ENCODE measurements at regions of chr17 and their contacts with region 1.

Region 1: GRCh38 chr17:2266045-2266864 is 37.3 kb downstream of the SMG6 start:
- DNase-seq: peak; percentile 58 to 97 (median 84)
- ATAC-seq: peak; percentile 79
- H3K4me3 ChIP-seq: peak overlapping the region; percentile 34 to 51
- H3K4me3 Mint-ChIP-seq: peak overlapping the region; percentile 58
- H3K27ac ChIP-seq: peak overlapping the region; percentile 88 to 95
- H3K27ac Mint-ChIP-seq: peak overlapping the region; percentile 96
- H3K4me1 ChIP-seq: peaks cover 86% of the 10 kb centered on the region
- H3K4me1 Mint-ChIP-seq: peaks cover 83% of the 10 kb centered on the region
- H3K27me3 ChIP-seq: no peaks in the 10 kb centered on the region
- H3K27me3 Mint-ChIP-seq: no peaks in the 10 kb centered on the region
- CTCF ChIP-seq: no peak

Region 2: GRCh38 chr17:2101448-2102257 is 164.6 kb before region 1 on chr17:
- CTCF ChIA-PET with region 1: no interaction called
- POLR2A ChIA-PET with region 1: no interaction called
- intact Hi-C with region 1: no loop called
- DNase-seq: peak in 8 of 9 experiments; percentile 39 to 81 (median 63)
- ATAC-seq: peak; percentile 83
- H3K4me3 ChIP-seq: no peak overlapping the region
- H3K4me3 Mint-ChIP-seq: peak overlapping the region; percentile 2
- H3K27ac ChIP-seq: peak overlapping the region; percentile 16 to 31
- H3K27ac Mint-ChIP-seq: peak overlapping the region; percentile 63
- H3K4me1 ChIP-seq: peaks cover 20% of the 10 kb centered on the region
- H3K4me1 Mint-ChIP-seq: peaks cover 18% of the 10 kb centered on the region
- H3K27me3 ChIP-seq: no peaks in the 10 kb centered on the region
- H3K27me3 Mint-ChIP-seq: no peaks in the 10 kb centered on the region
- CTCF ChIP-seq: no peak

Region 3: GRCh38 chr17:2192367-2193057 is 73.7 kb before region 1 on chr17:
- CTCF ChIA-PET with region 1: no interaction called
- POLR2A ChIA-PET with region 1: no interaction called
- intact Hi-C with region 1: loop called in 1 of 2 experiments (anchors 5 kb)
- DNase-seq: peak; percentile 24 to 89 (median 74)
- ATAC-seq: peak; percentile 90
- H3K4me3 ChIP-seq: no peak overlapping the region
- H3K4me3 Mint-ChIP-seq: peak overlapping the region; percentile 62
- H3K27ac ChIP-seq: peak overlapping the region in 1 of 2 experiments; percentile 33
- H3K27ac Mint-ChIP-seq: peak overlapping the region; percentile 87
- H3K4me1 ChIP-seq: peaks cover 48% of the 10 kb centered on the region
- H3K4me1 Mint-ChIP-seq: peaks cover 63% of the 10 kb centered on the region
- H3K27me3 ChIP-seq: no peaks in the 10 kb centered on the region
- H3K27me3 Mint-ChIP-seq: no peaks in the 10 kb centered on the region
- CTCF ChIP-seq: no peak

Region 4: DNA sequence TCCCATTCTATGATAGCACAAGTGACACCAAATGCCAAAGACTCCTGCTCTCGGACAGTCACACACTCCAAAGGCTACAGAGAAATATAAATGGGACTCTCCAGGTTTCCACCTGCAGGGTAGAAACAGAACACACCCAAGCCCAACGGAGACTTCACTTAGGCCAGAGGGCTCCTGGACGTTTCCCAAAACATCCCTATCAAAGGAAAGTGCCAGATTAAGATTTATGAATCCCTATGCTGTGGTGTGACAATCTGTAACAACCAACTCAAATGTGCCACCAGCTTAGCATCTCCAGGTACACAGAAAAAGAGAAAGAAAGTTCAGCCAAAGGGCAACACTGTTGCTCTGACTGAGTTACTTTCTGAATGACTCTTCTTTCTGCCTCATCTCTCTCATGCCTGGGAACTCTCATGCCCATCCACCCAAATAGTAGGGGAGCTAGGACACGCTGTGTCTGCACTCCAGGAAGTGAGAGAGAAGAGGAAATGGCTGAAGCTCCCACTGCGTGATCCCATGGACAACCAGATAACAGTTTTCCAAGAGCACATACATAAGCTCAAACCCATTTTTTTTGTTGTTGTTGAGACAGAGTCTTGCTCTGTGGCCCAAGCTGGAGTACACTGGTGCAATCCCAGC is 12.4 kb before region 1 on chr17:
- CTCF ChIA-PET with region 1: interaction called, 8 read pairs
- POLR2A ChIA-PET with region 1: interaction called, 12 read pairs
- intact Hi-C with region 1: loop called (anchors 1 kb)
- DNase-seq: peak in 1 of 9 experiments; percentile 33
- ATAC-seq: peak; percentile 36
- H3K4me3 ChIP-seq: no peak overlapping the region
- H3K4me3 Mint-ChIP-seq: no peak overlapping the region
- H3K27ac ChIP-seq: peak overlapping the region in 1 of 2 experiments; percentile 3
- H3K27ac Mint-ChIP-seq: peak overlapping the region; percentile 84
- H3K4me1 ChIP-seq: peaks cover 54% of the 10 kb centered on the region
- H3K4me1 Mint-ChIP-seq: peaks cover 61% of the 10 kb centered on the region
- H3K27me3 ChIP-seq: no peaks in the 10 kb centered on the region
- H3K27me3 Mint-ChIP-seq: no peaks in the 10 kb centered on the region
- CTCF ChIP-seq: no peak

Region 5: GRCh38 chr17:2282297-2282873 is 16.1 kb after region 1 on chr17:
- CTCF ChIA-PET with region 1: interaction called, 21 read pairs
- POLR2A ChIA-PET with region 1: interaction called, 7 read pairs
- intact Hi-C with region 1: loop called (anchors 1 kb)
- DNase-seq: peak in 2 of 9 experiments; percentile 71 to 81
- ATAC-seq: peak; percentile 77
- H3K4me3 ChIP-seq: no peak overlapping the region
- H3K4me3 Mint-ChIP-seq: no peak overlapping the region
- H3K27ac ChIP-seq: no peak overlapping the region
- H3K27ac Mint-ChIP-seq: peak overlapping the region; percentile 53
- H3K4me1 ChIP-seq: peaks cover 9% of the 10 kb centered on the region
- H3K4me1 Mint-ChIP-seq: peaks cover 21% of the 10 kb centered on the region
- H3K27me3 ChIP-seq: no peaks in the 10 kb centered on the region
- H3K27me3 Mint-ChIP-seq: no peaks in the 10 kb centered on the region
- CTCF ChIP-seq: peak; percentile 84

Region 6: GRCh38 chr17:2303204-2304188 is 37.2 kb after region 1 on chr17 and contains the starts of genes SMG6 and SRR:
- CTCF ChIA-PET with region 1: no interaction called
- POLR2A ChIA-PET with region 1: interaction called, 16 read pairs
- intact Hi-C with region 1: no loop called
- DNase-seq: peak; percentile 89 to 98 (median 95)
- ATAC-seq: peak; percentile 91
- H3K4me3 ChIP-seq: peak within 1 kb of the TSS; percentile 95 to 98
- H3K4me3 Mint-ChIP-seq: peak within 1 kb of the TSS; percentile 93
- H3K27ac ChIP-seq: peak within 1 kb of the TSS; percentile 76 to 85
- H3K27ac Mint-ChIP-seq: peak within 1 kb of the TSS; percentile 91
- H3K4me1 ChIP-seq: peaks cover 18% of the 10 kb centered on the region
- H3K4me1 Mint-ChIP-seq: peaks cover 43% of the 10 kb centered on the region
- H3K27me3 ChIP-seq: no peaks in the 10 kb centered on the region
- H3K27me3 Mint-ChIP-seq: no peaks in the 10 kb centered on the region
- CTCF ChIP-seq: no peak
- total RNA-seq, gene SMG6: 36.1 to 37.8 TPM
- total RNA-seq, gene SRR: 1.8 to 2.9 TPM